Activated naive CD4-positive, alpha-beta T cell treated with anti-CD3 and anti-CD28 coated beads for 36 hours (primary cell): ENCODE measurements at regions of chr11 and their contacts with region 1.

Region 1: GRCh38 chr11:133082851-133083488 is 449.3 kb downstream of the OPCML start:
- DNase-seq: peak; percentile 61
- H3K4me3 Mint-ChIP-seq: no peak overlapping the region
- H3K27ac Mint-ChIP-seq: no peak overlapping the region
- H3K4me1 Mint-ChIP-seq: peaks cover 4% of the 10 kb centered on the region
- H3K27me3 Mint-ChIP-seq: peaks cover 40% of the 10 kb centered on the region

Region 2: GRCh38 chr11:133163463-133164419 is 80.8 kb after region 1 on chr11:
- CTCF ChIA-PET with region 1: no interaction called
- intact Hi-C with region 1: loop called (anchors 2 kb)
- DNase-seq: peak; percentile 5
- H3K4me3 Mint-ChIP-seq: no peak overlapping the region
- H3K27ac Mint-ChIP-seq: no peak overlapping the region
- H3K4me1 Mint-ChIP-seq: no peaks in the 10 kb centered on the region
- H3K27me3 Mint-ChIP-seq: peaks cover 5% of the 10 kb centered on the region

Region 3: GRCh38 chr11:133302056-133302455 is 219.1 kb after region 1 on chr11:
- CTCF ChIA-PET with region 1: no interaction called
- intact Hi-C with region 1: loop called (anchors 5 kb)
- DNase-seq: no peak
- H3K4me3 Mint-ChIP-seq: no peak overlapping the region
- H3K27ac Mint-ChIP-seq: no peak overlapping the region
- H3K4me1 Mint-ChIP-seq: no peaks in the 10 kb centered on the region
- H3K27me3 Mint-ChIP-seq: peaks cover 3% of the 10 kb centered on the region

Region 4: DNA sequence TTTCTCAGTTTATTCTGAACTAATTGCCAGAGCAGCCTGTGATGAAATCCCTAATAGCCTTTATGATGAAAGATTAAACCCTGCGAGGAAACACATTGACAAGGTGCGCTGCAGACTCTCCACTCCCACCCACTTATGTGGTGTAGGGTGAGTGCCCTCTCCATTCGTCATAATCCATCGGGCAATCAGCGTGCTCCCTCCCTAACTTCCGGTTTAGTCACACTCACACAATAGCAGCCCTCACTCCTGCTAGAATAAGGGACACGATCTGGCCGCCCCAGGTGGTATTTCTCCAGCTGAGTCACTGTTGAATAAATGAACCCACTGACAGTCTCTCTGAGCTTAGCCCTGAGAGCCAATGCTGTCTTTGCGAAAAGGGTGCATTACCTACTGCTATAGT is 261.0 kb after region 1 on chr11:
- CTCF ChIA-PET with region 1: no interaction called
- intact Hi-C with region 1: no loop called
- DNase-seq: no peak
- H3K4me3 Mint-ChIP-seq: no peak overlapping the region
- H3K27ac Mint-ChIP-seq: no peak overlapping the region
- H3K4me1 Mint-ChIP-seq: no peaks in the 10 kb centered on the region
- H3K27me3 Mint-ChIP-seq: no peaks in the 10 kb centered on the region

Region 5: GRCh38 chr11:133834682-133835592 is 752.0 kb after region 1 on chr11:
- CTCF ChIA-PET with region 1: interaction called, 5 read pairs
- intact Hi-C with region 1: loop called (anchors 1 kb)
- DNase-seq: peak; percentile 73
- H3K4me3 Mint-ChIP-seq: no peak overlapping the region
- H3K27ac Mint-ChIP-seq: no peak overlapping the region
- H3K4me1 Mint-ChIP-seq: peaks cover 4% of the 10 kb centered on the region
- H3K27me3 Mint-ChIP-seq: peaks cover 9% of the 10 kb centered on the region